Tibial artery (tissue), 4 donors: ENCODE measurements at regions of chr11 and their contacts with region 1.

Region 1: GRCh38 chr11:96342961-96343711 is at the start of gene MAML2:
- DNase-seq: peak; percentile 92 to 96
- H3K4me3 ChIP-seq: peak within 1 kb of the TSS; percentile 70 to 73
- H3K27ac ChIP-seq: peak within 1 kb of the TSS; percentile 89 to 93
- H3K4me1 ChIP-seq: peaks cover 4 to 38% (median 34%) of the 10 kb centered on the region in 4 donors
- H3K27me3 ChIP-seq: no peaks in the 10 kb centered on the region
- CTCF ChIP-seq: peak; percentile 86 to 99

Region 2: GRCh38 chr11:95849087-95849825 is 493.9 kb before region 1 on chr11:
- intact Hi-C with region 1: loop called (anchors 5 kb)
- DNase-seq: peak; percentile 66 to 79
- H3K4me3 ChIP-seq: no peak overlapping the region
- H3K27ac ChIP-seq: peak overlapping the region; percentile 19 to 33
- H3K4me1 ChIP-seq: peaks cover 0 to 5% (median 4%) of the 10 kb centered on the region in 4 donors
- H3K27me3 ChIP-seq: no peaks in the 10 kb centered on the region
- CTCF ChIP-seq: peak; percentile 57 to 67

Region 3: GRCh38 chr11:96045622-96046456 is 297.3 kb before region 1 on chr11:
- intact Hi-C with region 1: loop called (anchors 5 kb)
- DNase-seq: peak; percentile 68 to 81
- H3K4me3 ChIP-seq: peak overlapping the region; percentile 42 to 49
- H3K27ac ChIP-seq: peak overlapping the region; percentile 71 to 75
- H3K4me1 ChIP-seq: peaks cover 0 to 14% (median 11%) of the 10 kb centered on the region in 4 donors
- H3K27me3 ChIP-seq: no peaks in the 10 kb centered on the region
- CTCF ChIP-seq: peak; percentile 38 to 50

Region 4: GRCh38 chr11:96215110-96215782 is 127.9 kb before region 1 on chr11:
- intact Hi-C with region 1: loop called (anchors 5 kb)
- DNase-seq: no peak
- H3K4me3 ChIP-seq: no peak overlapping the region
- H3K27ac ChIP-seq: peak overlapping the region; percentile 72 to 74
- H3K4me1 ChIP-seq: peaks cover 0 to 90% (median 72%) of the 10 kb centered on the region in 4 donors
- H3K27me3 ChIP-seq: no peaks in the 10 kb centered on the region
- CTCF ChIP-seq: no peak

Region 5: DNA sequence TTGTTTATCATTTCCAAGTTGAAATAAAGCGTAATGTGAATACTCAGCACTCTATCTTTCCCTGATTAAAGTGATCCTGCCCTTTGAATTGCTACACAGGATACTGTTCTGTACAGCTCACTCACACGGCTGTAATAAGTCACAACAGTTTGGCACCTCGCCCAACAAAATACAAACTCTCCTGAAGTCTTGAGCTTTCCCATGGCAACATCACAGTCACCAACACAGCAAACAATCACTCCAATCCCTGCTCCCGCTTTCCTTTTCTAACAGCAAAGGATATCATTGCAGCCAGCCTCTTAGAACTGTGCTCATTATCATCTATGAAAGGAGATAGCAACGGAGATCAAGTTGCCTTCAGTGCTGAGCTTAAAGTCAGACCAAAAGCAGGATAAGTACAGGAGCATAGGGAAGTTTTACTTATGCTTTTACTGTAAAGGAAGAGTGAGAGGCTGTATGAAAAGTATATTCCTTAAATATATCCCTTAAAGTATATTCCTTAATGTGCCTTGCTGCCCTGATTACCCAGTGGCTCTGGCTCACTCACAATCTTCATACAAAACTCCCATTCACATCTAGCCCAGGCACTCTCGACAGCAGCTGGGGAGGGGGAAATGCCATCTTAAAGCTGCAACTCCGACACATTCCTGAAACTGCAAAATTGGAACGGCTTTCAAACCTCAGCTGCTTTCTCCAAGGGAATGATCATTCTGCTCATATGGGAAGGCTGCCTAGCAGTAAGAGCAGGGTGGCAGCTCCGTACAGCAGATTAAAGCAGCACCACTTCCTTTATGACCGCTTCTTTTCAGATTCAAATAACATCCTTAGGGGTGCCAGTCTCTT is 36.0 kb before region 1 on chr11:
- intact Hi-C with region 1: loop called (anchors 5 kb)
- DNase-seq: peak; percentile 91 to 95
- H3K4me3 ChIP-seq: peak overlapping the region; percentile 37 to 42
- H3K27ac ChIP-seq: peak overlapping the region; percentile 71 to 72
- H3K4me1 ChIP-seq: peaks cover 0 to 90% (median 51%) of the 10 kb centered on the region in 4 donors
- H3K27me3 ChIP-seq: no peaks in the 10 kb centered on the region
- CTCF ChIP-seq: no peak